OCI-LY7 (cell line): ENCODE measurements at regions of chr12 and their contacts with region 1.

Region 1: GRCh38 chr12:109739747-109740693 is 26.4 kb downstream of the FAM222A start:
- DNase-seq: peak; percentile 24
- H3K4me3 ChIP-seq: no peak overlapping the region
- H3K27ac ChIP-seq: no peak overlapping the region
- H3K4me1 ChIP-seq: no peaks in the 10 kb centered on the region
- CTCF ChIP-seq: peak; percentile 72

Region 2: DNA sequence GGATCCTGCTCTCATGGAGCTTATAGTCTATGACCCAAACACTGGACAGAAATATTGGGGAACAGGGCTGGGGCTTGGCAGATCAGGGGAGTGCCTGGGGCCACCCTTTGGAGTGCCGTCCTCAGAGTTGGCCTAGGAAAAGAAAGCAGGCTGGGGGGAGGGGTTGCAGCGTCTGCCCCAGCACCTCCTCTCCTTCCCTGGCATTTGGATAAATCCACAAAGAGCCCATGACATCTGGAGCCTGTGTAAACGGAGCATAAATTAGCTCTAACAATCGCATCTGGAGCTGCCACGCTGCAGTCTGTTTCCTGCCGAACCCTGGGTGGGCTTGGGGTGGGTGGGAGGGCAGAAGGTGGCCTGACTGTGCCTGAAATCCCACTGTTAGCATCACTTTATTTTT is 102.7 kb before region 1 on chr12:
- CTCF ChIA-PET with region 1: interaction called, 20 read pairs
- POLR2A ChIA-PET with region 1: no interaction called
- intact Hi-C with region 1: no loop called
- DNase-seq: no peak
- H3K4me3 ChIP-seq: no peak overlapping the region
- H3K27ac ChIP-seq: no peak overlapping the region
- H3K4me1 ChIP-seq: no peaks in the 10 kb centered on the region
- CTCF ChIP-seq: no peak

Region 3: DNA sequence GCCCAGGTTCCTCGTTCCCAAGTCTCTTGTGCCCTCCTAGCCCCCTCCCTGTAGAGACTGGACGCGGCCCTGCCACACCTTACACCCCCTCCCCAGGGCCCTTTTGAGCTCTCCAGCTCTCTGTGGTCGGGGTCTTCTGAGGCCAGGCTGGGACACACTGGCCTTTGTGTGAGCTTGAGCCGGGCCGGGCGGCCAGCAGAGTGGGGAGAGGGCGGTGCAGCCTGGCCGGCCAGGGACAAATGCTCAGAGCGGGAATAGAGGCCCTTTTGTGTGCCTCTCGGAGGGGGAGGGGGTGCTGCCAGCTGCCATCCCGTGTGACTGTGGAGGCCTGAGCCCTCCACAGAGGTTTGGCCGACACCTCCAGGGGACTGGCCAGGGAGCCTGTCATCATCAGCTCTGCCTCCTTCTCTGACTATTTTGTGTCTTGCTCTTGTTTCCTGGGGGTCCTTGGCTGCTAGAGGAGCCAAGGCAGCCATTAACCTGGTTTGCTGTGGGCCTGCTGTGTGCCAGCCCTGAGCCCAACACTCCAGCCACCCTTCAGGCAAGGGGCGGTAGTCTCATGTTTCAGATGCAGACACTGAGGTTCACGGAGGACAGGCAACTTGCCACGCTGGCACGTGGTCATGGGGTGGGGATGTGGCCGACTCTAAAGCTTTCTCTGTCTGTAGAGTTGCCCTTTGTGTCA is 12.8 kb before region 1 on chr12:
- CTCF ChIA-PET with region 1: no interaction called
- POLR2A ChIA-PET with region 1: no interaction called
- intact Hi-C with region 1: no loop called
- DNase-seq: no peak
- H3K4me3 ChIP-seq: no peak overlapping the region
- H3K27ac ChIP-seq: no peak overlapping the region
- H3K4me1 ChIP-seq: no peaks in the 10 kb centered on the region
- CTCF ChIP-seq: no peak